ENCODE measurements at regions of chr11 and their contacts with region 1.

Region 1: DNA sequence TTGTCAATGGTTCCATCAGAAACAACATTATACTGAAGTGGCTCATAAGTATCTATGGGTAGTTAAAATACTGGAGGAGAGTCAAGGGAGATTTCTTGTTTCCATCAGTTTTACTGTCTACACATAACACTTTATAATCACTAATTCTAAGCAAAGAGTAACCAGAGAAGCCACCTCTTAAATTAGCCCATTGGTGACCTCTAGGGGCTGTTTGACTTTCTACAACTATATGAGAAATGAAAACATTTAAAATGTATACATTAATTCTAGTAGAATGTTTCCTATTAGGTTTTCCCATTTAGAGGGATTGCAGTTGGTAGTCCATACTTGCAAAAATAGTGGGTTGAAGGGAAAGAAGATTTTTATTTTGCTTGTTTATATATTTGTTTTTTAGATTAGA is 504.3 kb downstream of the FAM181B start:
- DNase-seq: peak in 1 of 2 experiments; percentile 38
- H3K4me3 ChIP-seq: no peak overlapping the region
- H3K4me3 Mint-ChIP-seq: no peak overlapping the region
- H3K27ac Mint-ChIP-seq: no peak overlapping the region
- H3K4me1 ChIP-seq: no peaks in the 10 kb centered on the region
- H3K4me1 Mint-ChIP-seq: no peaks in the 10 kb centered on the region
- H3K27me3 ChIP-seq: no peaks in the 10 kb centered on the region
- H3K27me3 Mint-ChIP-seq: peaks cover 9% of the 10 kb centered on the region
- CTCF ChIP-seq: peak; percentile 56 to 67

Region 2: GRCh38 chr11:81644239-81644840 is 585.0 kb before region 1 on chr11:
- CTCF ChIA-PET with region 1: no interaction called
- POLR2A ChIA-PET with region 1: no interaction called
- intact Hi-C with region 1: loop called (anchors 1 kb)
- DNase-seq: peak; percentile 61 to 65
- H3K4me3 ChIP-seq: no peak overlapping the region
- H3K4me3 Mint-ChIP-seq: no peak overlapping the region
- H3K27ac Mint-ChIP-seq: no peak overlapping the region
- H3K4me1 ChIP-seq: no peaks in the 10 kb centered on the region
- H3K4me1 Mint-ChIP-seq: peaks cover 6% of the 10 kb centered on the region
- H3K27me3 ChIP-seq: 0 out of 2 replicates have a peak, but pooled peaks cover 1% of the 10 kb centered on the region
- H3K27me3 Mint-ChIP-seq: peaks cover 16% of the 10 kb centered on the region
- CTCF ChIP-seq: peak; percentile 88 to 94

Region 3: GRCh38 chr11:81787584-81788049 is 441.7 kb before region 1 on chr11:
- CTCF ChIA-PET with region 1: no interaction called
- POLR2A ChIA-PET with region 1: no interaction called
- intact Hi-C with region 1: loop called (anchors 1 kb)
- DNase-seq: no peak
- H3K4me3 ChIP-seq: no peak overlapping the region
- H3K4me3 Mint-ChIP-seq: no peak overlapping the region
- H3K27ac Mint-ChIP-seq: no peak overlapping the region
- H3K4me1 ChIP-seq: no peaks in the 10 kb centered on the region
- H3K4me1 Mint-ChIP-seq: no peaks in the 10 kb centered on the region
- H3K27me3 ChIP-seq: no peaks in the 10 kb centered on the region
- H3K27me3 Mint-ChIP-seq: no peaks in the 10 kb centered on the region
- CTCF ChIP-seq: peak in 1 of 2 experiments; percentile 12

Region 4: GRCh38 chr11:82082981-82083380 is 146.4 kb before region 1 on chr11:
- CTCF ChIA-PET with region 1: no interaction called
- POLR2A ChIA-PET with region 1: no interaction called
- intact Hi-C with region 1: loop called (anchors 1 kb)
- DNase-seq: no peak
- H3K4me3 ChIP-seq: no peak overlapping the region
- H3K4me3 Mint-ChIP-seq: no peak overlapping the region
- H3K27ac Mint-ChIP-seq: no peak overlapping the region
- H3K4me1 ChIP-seq: no peaks in the 10 kb centered on the region
- H3K4me1 Mint-ChIP-seq: no peaks in the 10 kb centered on the region
- H3K27me3 ChIP-seq: no peaks in the 10 kb centered on the region
- H3K27me3 Mint-ChIP-seq: no peaks in the 10 kb centered on the region
- CTCF ChIP-seq: no peak

Region 5: DNA sequence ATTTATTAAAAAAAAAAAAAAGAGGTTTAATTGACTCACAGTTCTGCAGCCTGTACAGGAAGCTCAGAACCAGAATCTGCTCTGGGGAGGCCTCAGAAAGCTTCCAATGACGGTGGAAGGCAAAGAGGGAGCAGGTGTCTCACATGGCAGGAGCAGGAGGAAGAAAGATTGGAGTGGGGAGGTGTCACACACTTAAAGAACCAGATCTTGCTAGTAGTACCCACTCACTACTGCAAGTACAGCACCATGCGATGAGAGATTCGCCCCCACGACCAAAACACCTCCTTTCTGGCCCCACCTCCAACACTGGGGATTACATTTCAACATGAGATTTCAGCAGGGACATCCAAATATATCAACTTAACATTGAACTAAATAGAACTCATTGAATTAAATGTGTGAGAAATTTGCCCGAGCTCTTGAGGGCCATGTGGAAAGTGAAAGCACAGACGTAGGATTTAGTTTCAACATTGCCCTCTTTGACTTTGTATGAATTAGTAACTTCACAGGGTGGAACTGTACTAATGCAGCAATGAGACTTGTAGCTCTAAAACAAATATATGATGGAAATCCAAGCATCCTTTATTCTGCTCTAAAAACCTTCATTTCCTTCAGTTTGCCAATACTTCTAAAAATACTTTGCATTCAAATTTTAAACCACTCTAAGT is 123.9 kb before region 1 on chr11:
- CTCF ChIA-PET with region 1: no interaction called
- POLR2A ChIA-PET with region 1: no interaction called
- intact Hi-C with region 1: no loop called
- DNase-seq: no peak
- H3K4me3 ChIP-seq: no peak overlapping the region
- H3K4me3 Mint-ChIP-seq: no peak overlapping the region
- H3K27ac Mint-ChIP-seq: no peak overlapping the region
- H3K4me1 ChIP-seq: no peaks in the 10 kb centered on the region
- H3K4me1 Mint-ChIP-seq: no peaks in the 10 kb centered on the region
- H3K27me3 ChIP-seq: no peaks in the 10 kb centered on the region
- H3K27me3 Mint-ChIP-seq: no peaks in the 10 kb centered on the region
- CTCF ChIP-seq: no peak

Region 6: GRCh38 chr11:82174610-82175009 is 54.7 kb before region 1 on chr11:
- CTCF ChIA-PET with region 1: no interaction called
- POLR2A ChIA-PET with region 1: no interaction called
- intact Hi-C with region 1: loop called (anchors 1 kb)
- DNase-seq: peak in 1 of 2 experiments; percentile 40
- H3K4me3 ChIP-seq: no peak overlapping the region
- H3K4me3 Mint-ChIP-seq: no peak overlapping the region
- H3K27ac Mint-ChIP-seq: no peak overlapping the region
- H3K4me1 ChIP-seq: no peaks in the 10 kb centered on the region
- H3K4me1 Mint-ChIP-seq: no peaks in the 10 kb centered on the region
- H3K27me3 ChIP-seq: no peaks in the 10 kb centered on the region; the same call in 1 of the 2 replicates
- H3K27me3 Mint-ChIP-seq: peaks cover 3% of the 10 kb centered on the region
- CTCF ChIP-seq: peak; percentile 61 to 69

Region 7: DNA sequence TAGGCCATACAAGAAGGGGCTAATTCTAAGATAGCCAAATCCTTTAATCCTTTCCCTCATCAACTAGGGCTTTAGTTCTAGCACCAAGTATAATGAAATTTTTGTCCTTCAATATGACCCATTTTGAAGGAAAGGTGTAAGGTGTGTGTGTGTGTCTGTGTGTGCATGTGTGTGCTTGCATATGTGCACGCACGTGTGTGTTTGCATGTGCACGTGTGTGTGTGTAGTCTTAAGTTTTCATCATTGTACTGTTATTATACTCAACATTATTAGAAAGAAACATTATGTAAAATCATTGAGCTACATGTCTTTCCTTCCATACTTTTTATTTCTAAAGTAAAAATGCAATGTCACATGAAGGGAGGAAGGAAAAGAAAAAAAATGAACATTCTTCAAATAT is 43.4 kb before region 1 on chr11:
- CTCF ChIA-PET with region 1: no interaction called
- POLR2A ChIA-PET with region 1: no interaction called
- intact Hi-C with region 1: no loop called
- DNase-seq: no peak
- H3K4me3 ChIP-seq: no peak overlapping the region
- H3K4me3 Mint-ChIP-seq: no peak overlapping the region
- H3K27ac Mint-ChIP-seq: no peak overlapping the region
- H3K4me1 ChIP-seq: 0 out of 2 replicates have a peak, but pooled peaks cover 9% of the 10 kb centered on the region
- H3K4me1 Mint-ChIP-seq: no peaks in the 10 kb centered on the region
- H3K27me3 ChIP-seq: no peaks in the 10 kb centered on the region
- H3K27me3 Mint-ChIP-seq: no peaks in the 10 kb centered on the region
- CTCF ChIP-seq: no peak

Region 8: DNA sequence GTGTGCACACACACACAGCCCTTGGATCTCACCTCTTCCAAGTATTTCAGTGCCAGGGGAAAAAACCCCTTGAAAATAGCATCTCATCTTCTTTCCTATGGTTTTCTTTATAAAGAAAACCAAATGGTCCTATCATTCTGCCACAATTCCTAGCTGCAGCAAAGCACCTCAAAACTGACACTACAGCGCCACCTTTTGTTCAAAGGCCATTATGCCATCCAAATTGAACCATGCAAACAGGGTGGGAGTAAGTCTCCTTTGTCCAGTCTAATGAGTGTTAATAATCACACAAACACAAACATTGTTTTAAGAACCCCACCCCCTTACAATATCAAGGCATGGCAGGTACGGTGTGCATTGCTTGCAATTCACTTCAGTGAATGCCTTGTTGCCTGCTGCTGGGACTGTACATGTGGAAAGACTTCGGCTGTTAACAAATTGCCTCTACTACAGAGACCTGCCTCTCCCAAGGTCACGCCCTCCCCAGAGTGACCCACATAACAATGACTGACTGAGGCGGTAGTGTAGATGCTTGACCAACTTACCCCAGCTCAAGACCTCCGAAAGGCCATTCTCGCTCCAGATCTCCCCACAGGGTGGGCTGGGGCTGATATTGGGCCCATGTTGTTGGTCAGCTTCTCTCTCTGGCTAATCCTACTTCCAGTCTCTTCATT is 472.6 kb after region 1 on chr11:
- CTCF ChIA-PET with region 1: no interaction called
- POLR2A ChIA-PET with region 1: no interaction called
- intact Hi-C with region 1: loop called (anchors 5 kb)
- DNase-seq: peak; percentile 59 to 71
- H3K4me3 ChIP-seq: no peak overlapping the region
- H3K4me3 Mint-ChIP-seq: no peak overlapping the region
- H3K27ac Mint-ChIP-seq: no peak overlapping the region
- H3K4me1 ChIP-seq: no peaks in the 10 kb centered on the region
- H3K4me1 Mint-ChIP-seq: no peaks in the 10 kb centered on the region
- H3K27me3 ChIP-seq: no peaks in the 10 kb centered on the region; the same call in 1 of the 2 replicates
- H3K27me3 Mint-ChIP-seq: peaks cover 2% of the 10 kb centered on the region
- CTCF ChIP-seq: peak; percentile 81 to 86